ENCODE measurements at regions of chr3 and their contacts with region 1.

Region 1: GRCh38 chr3:98593046-98593936 is at the start of gene CPOX:
- DNase-seq: peak; percentile 80 to 95 (median 90)
- H3K4me3 ChIP-seq: peak within 1 kb of the TSS; percentile 58 to 96 (median 85)
- H3K27ac ChIP-seq: peak within 1 kb of the TSS; percentile 49 to 98 (median 94)
- H3K27me3 ChIP-seq: no peaks in the 10 kb centered on the region
- CTCF ChIP-seq: peak in 31 of 56 donors; percentile 5 to 53 (median 31)
- total RNA-seq, gene CPOX: 23.2 to 140 (median 47.8) TPM

Region 2: DNA sequence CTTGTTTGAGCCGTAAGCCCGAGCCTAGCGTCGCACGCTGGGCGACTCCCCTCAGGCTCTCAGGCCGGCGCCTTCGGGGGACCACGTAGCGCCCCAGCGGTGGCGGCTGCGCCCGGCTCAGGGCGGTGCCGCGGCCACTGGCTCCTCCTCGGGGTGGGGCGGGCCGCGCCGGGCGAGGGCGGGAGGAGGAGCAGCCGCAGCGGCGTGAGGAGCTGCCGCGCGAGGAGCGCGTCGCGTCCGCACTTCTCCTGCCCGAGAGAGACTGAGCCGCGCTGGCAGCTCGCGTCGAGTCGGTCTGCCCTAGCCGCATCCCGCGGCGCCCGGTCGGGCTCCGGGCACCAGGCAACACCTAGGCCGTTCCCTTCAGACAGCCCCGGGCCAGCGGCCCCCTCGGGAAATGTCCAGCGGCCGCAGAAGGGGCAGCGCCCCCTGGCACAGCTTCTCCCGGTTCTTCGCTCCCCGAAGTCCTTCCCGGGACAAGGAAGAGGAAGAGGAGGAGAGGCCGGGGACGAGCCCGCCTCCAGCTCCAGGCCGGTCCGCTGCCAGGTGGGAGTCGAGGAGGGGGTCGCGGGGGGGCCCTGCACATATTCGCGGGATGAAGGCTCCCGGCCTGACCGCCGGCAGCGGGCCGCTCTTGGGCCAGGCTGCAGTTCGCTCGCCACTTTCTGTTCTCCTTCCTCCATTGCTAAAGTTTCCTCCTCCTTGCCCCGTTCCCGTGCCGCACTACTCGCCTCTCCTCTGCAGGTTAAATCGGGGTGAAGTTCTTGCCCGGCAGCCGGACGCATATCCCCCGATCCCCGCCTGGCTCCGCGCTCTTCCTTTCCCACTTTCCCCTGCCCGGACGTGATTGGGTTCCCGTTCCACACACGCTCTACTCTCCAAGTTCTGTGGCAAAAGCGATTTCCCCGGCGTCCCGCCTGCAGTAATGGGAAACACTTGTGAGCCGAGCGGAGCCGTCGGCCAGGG is 771.2 kb before region 1 on chr3 and contains the start of gene CRYBG3:
- intact Hi-C with region 1: loop called in 1 of 2 experiments (anchors 10 kb)
- DNase-seq: peak; percentile 54 to 90 (median 65)
- H3K4me3 ChIP-seq: peak within 1 kb of the TSS; percentile 58 to 97 (median 82)
- H3K27ac ChIP-seq: peak within 1 kb of the TSS; percentile 13 to 93 (median 82)
- H3K27me3 ChIP-seq: no peaks in the 10 kb centered on the region
- CTCF ChIP-seq: peak in 38 of 56 donors; percentile 2 to 67 (median 38)
- total RNA-seq, gene CRYBG3: 9.4 to 40.2 (median 17.5) TPM

Region 3: DNA sequence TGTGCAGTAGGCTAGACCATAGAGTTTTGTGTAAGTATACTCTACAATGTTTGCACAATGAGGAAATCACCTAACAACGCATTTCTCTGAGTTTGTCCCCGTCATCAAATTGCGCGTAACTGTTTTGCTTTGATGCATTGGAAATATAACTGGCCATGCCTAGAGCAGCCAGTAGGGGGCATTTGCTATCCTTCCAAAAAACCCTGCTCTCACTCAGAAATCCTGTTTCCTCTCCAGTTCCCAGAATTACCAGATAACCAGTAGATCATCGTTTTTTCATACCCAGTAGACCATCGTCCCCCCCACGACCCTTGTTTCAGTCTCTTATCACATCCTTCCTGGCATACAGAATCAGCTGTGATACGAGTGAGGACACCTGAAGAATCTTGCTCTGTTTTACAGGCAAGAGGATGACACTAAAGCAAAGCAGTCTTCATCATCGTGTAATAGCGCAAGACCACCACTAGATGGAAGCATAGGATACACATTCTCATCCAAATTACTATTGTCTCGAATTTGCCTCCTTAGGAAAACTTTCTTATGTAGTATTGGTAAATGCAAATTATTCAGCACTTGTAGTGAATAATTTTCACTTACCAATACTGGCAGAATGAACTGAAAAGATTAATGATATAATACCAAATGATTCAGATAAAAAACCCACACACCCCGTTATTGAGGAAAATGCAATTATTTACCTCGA is 553.8 kb before region 1 on chr3:
- intact Hi-C with region 1: loop called (anchors 5 to 10 kb)
- DNase-seq: peak in 9 of 10 donors; percentile 16 to 76 (median 49)
- H3K4me3 ChIP-seq: peak overlapping the region; percentile 17 to 68 (median 52)
- H3K27ac ChIP-seq: peak overlapping the region in 27 of 59 donors; percentile 20 to 81 (median 59)
- H3K27me3 ChIP-seq: peaks cover 0 to 13% (median 0%) of the 10 kb centered on the region in 45 donors
- CTCF ChIP-seq: peak in 54 of 56 donors; percentile 84 to 100 (median 96)

Region 4: DNA sequence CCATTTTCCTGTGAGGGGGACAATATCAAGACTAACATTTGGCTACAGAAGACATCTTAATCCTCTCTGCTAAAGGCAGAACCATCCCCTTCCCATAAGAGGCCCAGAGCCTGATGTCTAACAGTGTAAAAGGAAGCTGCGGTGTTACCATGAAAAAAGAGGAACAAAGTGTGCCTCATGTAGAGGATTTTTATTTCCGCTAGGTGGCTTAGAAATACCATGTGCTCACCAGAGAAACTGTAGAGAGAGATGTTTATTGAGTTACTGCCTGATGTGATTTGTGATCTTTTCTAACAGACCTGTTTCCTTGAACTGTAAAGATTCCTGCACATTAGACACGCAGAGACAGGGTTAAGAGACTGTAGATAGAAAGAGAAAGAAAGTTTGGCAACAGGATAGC is 404.7 kb before region 1 on chr3:
- intact Hi-C with region 1: loop called in 1 of 2 experiments (anchors 10 kb)
- DNase-seq: no peak
- H3K4me3 ChIP-seq: no peak overlapping the region
- H3K27ac ChIP-seq: no peak overlapping the region
- H3K27me3 ChIP-seq: no peaks in the 10 kb centered on the region
- CTCF ChIP-seq: peak in 27 of 56 donors; percentile 10 to 48 (median 25)

Region 5: GRCh38 chr3:98522244-98523090 is 70.8 kb before region 1 on chr3 and contains the start of gene CLDND1:
- intact Hi-C with region 1: loop called (anchors 2 kb)
- DNase-seq: peak; percentile 98 to 99 (median 99)
- H3K4me3 ChIP-seq: peak within 1 kb of the TSS; percentile 59 to 98 (median 85)
- H3K27ac ChIP-seq: peak within 1 kb of the TSS; percentile 89 to 100 (median 97)
- H3K27me3 ChIP-seq: no peaks in the 10 kb centered on the region
- CTCF ChIP-seq: peak in 23 of 56 donors; percentile 2 to 50 (median 29)
- total RNA-seq, gene CLDND1: 175 to 2,533 (median 594) TPM

Region 6: DNA sequence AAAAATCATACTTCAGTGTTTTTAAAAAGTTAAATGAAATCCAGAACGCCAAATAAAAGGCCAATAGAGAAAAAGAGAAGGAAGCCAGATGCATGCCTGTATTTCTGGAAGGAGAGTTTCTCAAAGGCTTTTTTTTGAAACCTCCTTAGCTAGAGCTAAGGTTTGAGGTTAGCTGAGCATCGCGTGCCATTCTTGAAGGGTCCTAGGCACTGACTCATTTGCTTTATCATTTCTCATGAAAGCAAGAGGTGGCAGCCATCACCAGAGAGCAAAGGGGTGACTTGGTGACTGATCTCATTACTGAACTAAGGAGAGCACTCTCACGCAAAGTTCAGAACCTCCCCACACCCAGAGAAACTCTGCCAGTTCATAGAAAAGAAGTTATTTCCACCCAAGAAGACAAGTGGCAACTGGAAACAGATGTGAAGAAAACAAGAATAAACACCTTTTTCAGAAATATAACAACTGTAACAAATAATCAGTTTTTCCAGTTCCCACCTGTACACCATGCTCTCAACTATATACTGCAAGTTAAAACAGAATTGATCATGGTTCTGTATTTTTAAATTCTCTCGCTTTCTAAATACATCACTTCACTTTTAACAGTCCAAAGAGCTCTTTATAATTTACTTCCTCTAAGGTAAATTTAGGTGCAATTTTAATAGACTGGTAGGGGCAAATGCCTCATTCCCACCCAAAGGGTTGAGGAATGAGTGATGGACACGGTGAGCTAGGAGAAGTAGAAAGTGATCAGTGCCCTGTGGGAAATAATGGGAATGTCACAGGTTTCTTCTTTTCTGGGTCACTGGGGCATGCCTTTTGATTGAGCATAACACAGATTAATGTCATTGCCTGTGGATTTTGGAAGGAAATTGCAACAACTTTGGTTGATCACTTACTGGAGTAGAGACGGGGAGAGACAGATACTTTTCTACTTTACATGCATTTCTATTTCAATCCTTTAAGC is 36.8 kb before region 1 on chr3:
- intact Hi-C with region 1: no loop called
- DNase-seq: no peak
- H3K4me3 ChIP-seq: no peak overlapping the region
- H3K27ac ChIP-seq: no peak overlapping the region
- H3K27me3 ChIP-seq: no peaks in the 10 kb centered on the region
- CTCF ChIP-seq: no peak

Region 7: GRCh38 chr3:98612587-98612986 is 19.3 kb after region 1 on chr3:
- intact Hi-C with region 1: no loop called
- DNase-seq: no peak
- H3K4me3 ChIP-seq: no peak overlapping the region
- H3K27ac ChIP-seq: peak overlapping the region in 1 of 59 donors; percentile 32
- H3K27me3 ChIP-seq: no peaks in the 10 kb centered on the region
- CTCF ChIP-seq: no peak

Region 8: GRCh38 chr3:98877132-98877531 is 283.8 kb after region 1 on chr3:
- intact Hi-C with region 1: no loop called
- DNase-seq: no peak
- H3K4me3 ChIP-seq: no peak overlapping the region
- H3K27ac ChIP-seq: no peak overlapping the region
- H3K27me3 ChIP-seq: no peaks in the 10 kb centered on the region
- CTCF ChIP-seq: no peak

Region 9: GRCh38 chr3:98901392-98902350 is 308.4 kb after region 1 on chr3 and contains the start of gene DCBLD2:
- intact Hi-C with region 1: loop called (anchors 5 kb)
- DNase-seq: peak; percentile 95 to 99 (median 98)
- H3K4me3 ChIP-seq: peak within 1 kb of the TSS; percentile 66 to 98 (median 89)
- H3K27ac ChIP-seq: peak within 1 kb of the TSS; percentile 59 to 97 (median 92)
- H3K27me3 ChIP-seq: no peaks in the 10 kb centered on the region
- CTCF ChIP-seq: peak in 15 of 56 donors; percentile 7 to 48 (median 18)
- total RNA-seq, gene DCBLD2: 13.2 to 33.0 (median 22.0) TPM

Measured in dorsolateral prefrontal cortex (tissue), 120 donors.